Calu3 (cell line): ENCODE measurements at regions of chr4 and their contacts with region 1.

Region 1: DNA sequence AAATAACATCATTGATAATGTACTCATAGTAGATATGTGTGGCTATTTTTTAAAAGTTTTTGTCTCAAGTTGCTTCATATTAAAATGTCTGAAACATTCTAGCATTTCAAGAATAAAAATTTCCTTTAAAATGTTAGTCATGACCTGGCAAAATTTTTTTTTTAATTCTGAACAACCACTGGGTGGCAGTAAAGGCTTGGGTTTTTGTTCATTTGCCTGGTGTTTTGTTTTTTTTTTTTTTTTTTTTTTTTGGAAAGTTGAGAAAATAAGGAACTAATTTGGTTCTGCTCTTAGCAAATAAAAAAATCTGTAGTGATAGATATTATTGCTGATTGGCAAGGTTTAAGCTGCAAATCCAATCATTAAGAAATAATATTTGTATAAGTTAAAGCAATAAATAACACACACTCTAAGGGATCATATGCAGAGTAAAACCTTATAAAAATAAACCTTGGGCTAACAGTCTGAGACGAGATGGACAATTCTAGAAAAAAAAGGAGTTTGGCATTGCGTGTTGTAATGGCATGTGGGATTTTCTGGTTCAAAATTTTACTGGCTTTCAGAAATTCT is 81.4 kb downstream of the CEP44 start:
- DNase-seq: peak; percentile 42
- H3K4me3 Mint-ChIP-seq: no peak overlapping the region
- H3K27ac Mint-ChIP-seq: no peak overlapping the region
- H3K4me1 Mint-ChIP-seq: no peaks in the 10 kb centered on the region
- H3K27me3 Mint-ChIP-seq: no peaks in the 10 kb centered on the region
- CTCF ChIP-seq: peak; percentile 21

Region 2: DNA sequence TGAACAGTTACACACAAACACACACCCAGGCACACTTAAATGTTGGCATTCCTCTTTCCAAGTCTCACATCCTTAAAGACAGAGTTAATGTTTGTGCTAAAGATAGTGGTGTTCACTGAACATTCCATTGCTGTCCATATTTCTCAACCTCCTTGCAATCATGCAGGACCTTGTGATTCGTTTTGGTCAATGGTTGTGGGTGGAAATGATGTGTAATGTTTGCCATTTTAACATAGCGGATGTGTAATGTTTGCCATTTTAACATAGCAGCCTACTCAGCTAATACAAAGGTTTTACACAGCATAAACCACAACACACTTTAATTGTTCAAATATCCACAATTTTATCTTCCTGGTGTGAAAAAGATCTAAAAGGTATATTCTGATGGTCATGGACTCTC is 12.5 kb after region 1 on chr4:
- CTCF ChIA-PET with region 1: no interaction called
- intact Hi-C with region 1: no loop called
- DNase-seq: no peak
- H3K4me3 Mint-ChIP-seq: no peak overlapping the region
- H3K27ac Mint-ChIP-seq: no peak overlapping the region
- H3K4me1 Mint-ChIP-seq: peaks cover 3% of the 10 kb centered on the region
- H3K27me3 Mint-ChIP-seq: no peaks in the 10 kb centered on the region
- CTCF ChIP-seq: no peak

Region 3: GRCh38 chr4:174450457-174451125 is 85.5 kb after region 1 on chr4:
- CTCF ChIA-PET with region 1: no interaction called
- intact Hi-C with region 1: no loop called
- DNase-seq: no peak
- H3K4me3 Mint-ChIP-seq: no peak overlapping the region
- H3K27ac Mint-ChIP-seq: no peak overlapping the region
- H3K4me1 Mint-ChIP-seq: peaks cover 17% of the 10 kb centered on the region
- H3K27me3 Mint-ChIP-seq: no peaks in the 10 kb centered on the region
- CTCF ChIP-seq: no peak

Region 4: DNA sequence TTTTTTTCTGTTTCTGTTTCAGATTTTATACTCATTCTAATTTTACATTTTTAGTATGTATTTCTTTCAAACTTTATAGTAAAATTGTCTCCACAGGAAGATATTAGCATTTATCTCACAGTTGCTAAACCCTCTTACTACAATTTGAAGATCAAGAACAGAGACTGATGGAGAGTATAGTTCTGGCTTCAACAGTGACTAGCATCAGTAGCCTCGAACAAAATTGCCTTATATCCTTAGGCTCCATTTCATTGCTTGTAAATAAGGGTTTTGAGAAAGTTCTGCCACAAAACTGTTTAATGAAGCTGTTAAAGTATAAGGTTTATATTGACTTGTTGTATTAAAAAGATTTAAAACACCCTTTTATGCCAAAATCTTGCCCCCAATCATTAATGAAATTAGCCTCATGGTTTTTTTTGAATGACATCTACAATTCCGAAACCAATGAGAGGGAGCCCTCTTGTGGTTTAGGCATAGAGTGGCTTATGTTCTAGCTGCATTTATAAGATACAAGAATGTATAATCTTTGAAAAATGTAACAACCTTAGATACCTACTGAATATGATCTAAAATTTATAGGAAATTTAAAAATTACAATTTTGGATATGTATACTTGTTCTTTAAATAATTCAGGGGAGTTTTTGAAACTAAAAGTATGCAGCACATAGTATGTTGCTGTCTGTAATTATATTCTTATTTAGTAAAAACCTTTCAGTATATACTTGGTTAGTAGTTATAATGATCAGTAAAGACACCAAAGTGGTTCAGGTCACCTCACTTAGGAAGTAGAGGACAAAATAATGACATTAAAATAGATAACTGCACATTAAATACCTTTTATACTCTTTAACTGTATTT is 267.0 kb after region 1 on chr4:
- CTCF ChIA-PET with region 1: no interaction called
- intact Hi-C with region 1: loop called (anchors 1 kb)
- DNase-seq: peak; percentile 12
- H3K4me3 Mint-ChIP-seq: no peak overlapping the region
- H3K27ac Mint-ChIP-seq: no peak overlapping the region
- H3K4me1 Mint-ChIP-seq: peaks cover 3% of the 10 kb centered on the region
- H3K27me3 Mint-ChIP-seq: no peaks in the 10 kb centered on the region
- CTCF ChIP-seq: no peak

Region 5: DNA sequence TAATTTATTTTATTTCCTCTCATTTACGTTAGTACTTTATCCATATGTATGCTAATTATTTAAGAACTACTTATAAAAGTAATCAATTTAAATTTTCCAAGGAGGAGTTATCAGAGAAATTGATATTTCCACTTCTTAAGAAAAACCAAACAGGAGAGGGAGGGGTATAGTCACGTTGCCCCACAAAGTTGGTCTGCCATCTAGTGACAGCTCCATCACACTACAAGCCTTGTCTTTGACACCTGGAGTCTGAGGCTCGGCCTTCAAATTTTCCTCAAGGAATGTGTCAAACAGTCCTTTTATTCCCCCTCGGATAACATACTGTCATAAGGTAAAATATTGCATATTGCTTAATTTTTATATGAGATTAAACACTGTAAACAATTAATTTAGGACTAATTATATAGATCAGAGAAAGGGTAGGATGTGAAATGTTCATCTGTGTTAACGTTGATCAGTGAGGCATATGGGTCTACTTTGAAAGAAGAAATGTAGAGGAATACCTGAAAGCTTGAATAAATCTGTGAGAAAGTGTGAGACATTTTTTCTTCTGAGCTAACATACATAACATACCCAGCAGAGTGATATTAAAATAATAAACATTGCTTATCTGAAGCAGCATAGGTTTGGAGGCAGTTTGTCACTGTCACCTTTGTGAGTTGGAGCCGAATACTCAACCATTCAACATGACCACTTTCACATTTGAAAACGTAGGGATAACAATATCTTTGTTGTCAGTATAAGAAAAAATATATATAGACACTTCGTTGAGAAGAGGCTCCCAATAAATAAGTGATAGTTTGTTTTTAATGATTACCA is 349.5 kb after region 1 on chr4:
- CTCF ChIA-PET with region 1: no interaction called
- intact Hi-C with region 1: loop called (anchors 2 kb)
- DNase-seq: peak; percentile 39
- H3K4me3 Mint-ChIP-seq: no peak overlapping the region
- H3K27ac Mint-ChIP-seq: no peak overlapping the region
- H3K4me1 Mint-ChIP-seq: no peaks in the 10 kb centered on the region
- H3K27me3 Mint-ChIP-seq: no peaks in the 10 kb centered on the region
- CTCF ChIP-seq: peak; percentile 47